Activated CD4-positive, alpha-beta memory T cell treated with anti-CD3 and anti-CD28 coated beads, Interleukin-2, amount 10 ng/mL, durations not matched to agents 7 days and 5 days (primary cell): ENCODE measurements at regions of chr22 and their contacts with region 1.

Region 1: DNA sequence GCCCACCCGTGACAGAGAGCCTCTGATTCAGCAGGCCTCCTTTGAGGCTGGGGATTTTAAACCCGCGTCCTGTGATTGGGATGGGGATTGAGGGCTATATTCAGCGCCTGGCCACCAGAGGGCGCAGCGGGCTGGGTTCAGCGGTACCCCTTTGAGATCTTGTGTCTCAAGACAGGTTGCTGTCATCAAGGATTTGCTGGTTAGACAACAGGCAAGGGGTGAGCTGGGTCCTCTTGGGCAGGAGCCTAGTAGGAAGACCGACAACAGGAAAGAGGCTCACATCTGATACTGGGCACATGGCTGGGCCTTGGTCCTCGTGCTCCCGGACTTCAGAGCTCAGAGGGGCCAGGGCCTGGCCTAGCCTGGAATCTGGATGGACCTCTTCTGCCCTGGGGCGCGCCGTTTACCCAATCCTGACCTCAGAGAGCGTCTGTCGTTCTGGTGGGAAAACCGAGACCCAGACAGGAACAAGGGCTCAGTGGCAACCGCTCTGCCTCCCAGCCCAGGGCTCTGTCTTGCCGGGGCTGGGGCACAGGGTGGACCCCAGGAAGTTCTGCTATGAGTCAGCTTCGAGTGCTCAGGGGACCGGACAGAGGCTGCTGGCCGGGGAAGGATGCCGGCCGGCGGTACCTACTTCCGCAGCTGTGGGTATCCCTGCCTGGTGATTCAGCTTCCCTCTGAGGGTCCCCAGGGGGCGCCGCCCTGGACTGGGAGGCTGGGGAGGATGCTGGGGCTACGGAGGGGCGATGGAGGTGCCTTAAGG is 929 bp upstream of the SLC35E4 start:
- DNase-seq: peak; percentile 92
- H3K4me3 Mint-ChIP-seq: peak overlapping the region; percentile 83
- H3K27ac Mint-ChIP-seq: peak overlapping the region; percentile 88
- H3K4me1 Mint-ChIP-seq: peaks cover 33% of the 10 kb centered on the region
- H3K27me3 Mint-ChIP-seq: no peaks in the 10 kb centered on the region

Region 2: DNA sequence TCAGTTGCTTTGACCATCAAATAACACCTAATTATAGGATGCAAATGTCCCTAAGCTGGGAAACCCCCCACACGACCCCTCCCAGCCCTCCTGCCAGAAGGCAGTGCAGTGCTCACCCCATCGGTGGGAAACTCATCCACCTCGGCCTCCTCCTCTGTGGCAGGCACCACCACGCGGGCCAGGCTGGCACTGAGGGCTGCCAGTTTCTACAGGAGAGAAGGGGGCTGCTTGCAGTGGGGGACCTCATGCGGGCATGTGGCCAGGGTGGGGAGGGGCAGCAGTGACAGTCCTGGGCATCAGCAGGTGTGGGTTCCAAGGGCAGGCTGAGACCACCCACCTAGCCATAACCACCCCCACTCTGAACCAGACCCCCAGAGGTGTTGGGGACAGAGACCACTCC is 53.8 kb before region 1 on chr22:
- CTCF ChIA-PET with region 1: no interaction called
- POLR2A ChIA-PET with region 1: no interaction called
- DNase-seq: no peak
- H3K4me3 Mint-ChIP-seq: no peak overlapping the region
- H3K27ac Mint-ChIP-seq: no peak overlapping the region
- H3K4me1 Mint-ChIP-seq: no peaks in the 10 kb centered on the region
- H3K27me3 Mint-ChIP-seq: no peaks in the 10 kb centered on the region

Region 3: DNA sequence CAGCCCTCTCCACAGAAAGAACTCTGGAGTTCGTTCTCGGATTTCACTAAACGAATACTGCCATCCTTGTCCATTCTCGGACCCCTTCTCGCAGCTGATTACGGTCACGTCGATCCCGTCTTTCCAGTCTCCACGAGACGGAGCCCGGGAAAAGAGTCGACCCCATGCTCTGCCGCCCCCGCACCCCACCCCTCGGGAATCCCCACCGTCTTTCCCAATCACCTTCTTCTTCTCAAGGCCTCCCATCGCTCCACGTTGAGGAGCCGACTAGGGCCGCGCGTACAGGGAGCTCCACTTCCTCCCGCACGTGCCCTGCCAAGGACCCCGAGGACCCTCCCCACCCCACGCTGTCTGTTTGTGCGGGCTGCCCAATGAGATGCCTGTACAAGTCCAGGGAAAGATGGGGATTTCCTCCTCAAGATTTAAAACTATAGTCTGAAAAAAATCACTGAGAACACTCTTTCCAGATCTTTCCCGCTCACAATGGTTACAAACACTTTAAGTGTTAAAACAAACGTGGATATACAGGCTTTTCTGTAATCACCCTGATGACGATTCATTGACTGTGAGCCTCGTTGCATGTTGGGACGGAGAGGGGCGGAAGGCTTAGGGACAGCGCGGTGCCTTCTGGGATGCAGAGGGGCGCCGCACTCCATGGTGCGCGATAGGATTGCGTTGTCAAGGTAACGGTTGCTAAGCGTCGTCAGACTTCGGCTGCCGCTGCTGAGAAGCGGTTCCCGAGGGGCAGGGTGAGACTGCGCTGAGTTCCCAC is 42.9 kb before region 1 on chr22 and contains the start of gene PES1:
- CTCF ChIA-PET with region 1: interaction called, 12 read pairs
- POLR2A ChIA-PET with region 1: interaction called, 12 read pairs
- DNase-seq: peak; percentile 95
- H3K4me3 Mint-ChIP-seq: no peak within 1 kb of the TSS
- H3K27ac Mint-ChIP-seq: no peak within 1 kb of the TSS
- H3K4me1 Mint-ChIP-seq: peaks cover 1% of the 10 kb centered on the region
- H3K27me3 Mint-ChIP-seq: peaks cover 10% of the 10 kb centered on the region
- total RNA-seq, gene PES1: 48.3 to 54.9 TPM

Region 4: GRCh38 chr22:30615543-30615954 is 19.1 kb before region 1 on chr22:
- CTCF ChIA-PET with region 1: interaction called, 10 read pairs
- POLR2A ChIA-PET with region 1: no interaction called
- DNase-seq: no peak
- H3K4me3 Mint-ChIP-seq: no peak overlapping the region
- H3K27ac Mint-ChIP-seq: no peak overlapping the region
- H3K4me1 Mint-ChIP-seq: peaks cover under 1% of the 10 kb centered on the region
- H3K27me3 Mint-ChIP-seq: no peaks in the 10 kb centered on the region

Region 5: GRCh38 chr22:30667494-30668385 is 33.1 kb after region 1 on chr22 and contains the start of gene DUSP18:
- CTCF ChIA-PET with region 1: interaction called, 20 read pairs
- POLR2A ChIA-PET with region 1: interaction called, 24 read pairs
- DNase-seq: peak; percentile 96
- H3K4me3 Mint-ChIP-seq: peak within 1 kb of the TSS; percentile 95
- H3K27ac Mint-ChIP-seq: peak within 1 kb of the TSS; percentile 81
- H3K4me1 Mint-ChIP-seq: peaks cover 24% of the 10 kb centered on the region
- H3K27me3 Mint-ChIP-seq: peaks cover 3% of the 10 kb centered on the region
- total RNA-seq, gene DUSP18: 14.3 to 18.5 TPM

Region 6: DNA sequence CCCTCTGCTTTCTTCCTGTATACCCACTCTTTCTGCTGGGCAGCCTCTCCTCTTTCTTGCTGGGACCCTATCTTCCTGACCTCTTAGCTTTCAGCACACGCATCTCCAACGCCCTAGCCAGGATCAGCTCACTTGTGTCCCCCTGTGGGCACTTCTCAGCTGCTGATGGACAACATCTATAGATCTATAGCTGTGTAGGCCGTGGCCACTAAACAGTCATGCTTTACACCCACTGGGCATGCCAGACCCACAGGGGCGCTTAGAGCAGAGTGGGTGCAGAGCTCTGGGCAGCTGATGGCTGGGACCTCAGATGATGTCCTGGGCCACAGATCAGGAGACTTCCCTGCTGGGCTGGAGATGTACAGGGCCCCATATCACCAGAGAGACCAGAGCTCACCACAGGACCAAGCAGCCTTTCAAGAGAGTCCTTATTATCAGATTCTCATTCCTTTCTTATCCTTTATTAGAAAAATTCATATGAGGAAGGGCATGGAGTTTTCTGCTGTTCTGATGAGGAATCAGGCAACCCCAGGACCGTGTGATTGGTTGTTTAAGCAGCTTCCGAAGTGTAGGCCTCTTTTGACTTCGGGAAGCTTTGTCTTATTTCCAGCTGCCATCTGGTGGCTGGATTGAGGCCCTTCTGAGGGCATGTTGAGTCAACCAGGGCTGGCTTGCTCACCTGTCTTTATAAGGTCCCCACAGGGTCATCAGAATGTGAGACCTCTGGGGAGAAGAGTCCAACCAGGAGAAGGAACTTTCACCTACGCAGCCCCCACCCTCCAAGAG is 120.5 kb after region 1 on chr22:
- CTCF ChIA-PET with region 1: interaction called, 217 read pairs
- POLR2A ChIA-PET with region 1: interaction called, 62 read pairs
- DNase-seq: peak; percentile 74
- H3K4me3 Mint-ChIP-seq: no peak overlapping the region
- H3K27ac Mint-ChIP-seq: no peak overlapping the region
- H3K4me1 Mint-ChIP-seq: peaks cover 17% of the 10 kb centered on the region
- H3K27me3 Mint-ChIP-seq: no peaks in the 10 kb centered on the region

Region 7: DNA sequence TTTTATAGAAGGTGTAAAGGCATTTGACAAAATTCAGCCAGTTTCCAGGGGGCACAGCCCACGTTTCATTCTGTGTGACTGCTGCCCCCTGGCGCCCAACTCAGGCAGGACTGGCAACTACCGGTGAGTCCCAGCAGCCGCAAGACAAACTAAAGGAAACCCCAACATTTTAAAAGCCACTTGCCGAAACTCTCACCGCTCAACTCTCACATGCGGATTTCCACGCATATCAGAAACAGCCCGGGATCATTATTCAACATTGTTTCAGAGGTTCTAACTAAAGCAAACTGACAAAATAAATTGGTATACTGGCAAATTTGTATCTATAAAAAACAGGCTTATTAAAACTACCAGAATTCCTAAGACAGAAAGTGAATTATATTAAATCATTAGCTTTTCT is 285.8 kb after region 1 on chr22:
- CTCF ChIA-PET with region 1: interaction called, 22 read pairs
- POLR2A ChIA-PET with region 1: interaction called, 11 read pairs
- DNase-seq: peak; percentile 82
- H3K4me3 Mint-ChIP-seq: peak overlapping the region; percentile 40
- H3K27ac Mint-ChIP-seq: no peak overlapping the region
- H3K4me1 Mint-ChIP-seq: peaks cover 15% of the 10 kb centered on the region
- H3K27me3 Mint-ChIP-seq: no peaks in the 10 kb centered on the region

Region 8: GRCh38 chr22:31080848-31081649 is 446.4 kb after region 1 on chr22 and contains the start of gene SMTN:
- CTCF ChIA-PET with region 1: interaction called, 12 read pairs
- POLR2A ChIA-PET with region 1: interaction called, 3 read pairs
- DNase-seq: peak; percentile 90
- H3K4me3 Mint-ChIP-seq: peak within 1 kb of the TSS; percentile 85
- H3K27ac Mint-ChIP-seq: peak within 1 kb of the TSS; percentile 14
- H3K4me1 Mint-ChIP-seq: peaks cover 38% of the 10 kb centered on the region
- H3K27me3 Mint-ChIP-seq: no peaks in the 10 kb centered on the region
- total RNA-seq, gene SMTN: 36.4 to 41.4 TPM